Heart left ventricle (tissue), 16 donors: ENCODE measurements at regions of chr7 and their contacts with region 1.

Region 1: DNA sequence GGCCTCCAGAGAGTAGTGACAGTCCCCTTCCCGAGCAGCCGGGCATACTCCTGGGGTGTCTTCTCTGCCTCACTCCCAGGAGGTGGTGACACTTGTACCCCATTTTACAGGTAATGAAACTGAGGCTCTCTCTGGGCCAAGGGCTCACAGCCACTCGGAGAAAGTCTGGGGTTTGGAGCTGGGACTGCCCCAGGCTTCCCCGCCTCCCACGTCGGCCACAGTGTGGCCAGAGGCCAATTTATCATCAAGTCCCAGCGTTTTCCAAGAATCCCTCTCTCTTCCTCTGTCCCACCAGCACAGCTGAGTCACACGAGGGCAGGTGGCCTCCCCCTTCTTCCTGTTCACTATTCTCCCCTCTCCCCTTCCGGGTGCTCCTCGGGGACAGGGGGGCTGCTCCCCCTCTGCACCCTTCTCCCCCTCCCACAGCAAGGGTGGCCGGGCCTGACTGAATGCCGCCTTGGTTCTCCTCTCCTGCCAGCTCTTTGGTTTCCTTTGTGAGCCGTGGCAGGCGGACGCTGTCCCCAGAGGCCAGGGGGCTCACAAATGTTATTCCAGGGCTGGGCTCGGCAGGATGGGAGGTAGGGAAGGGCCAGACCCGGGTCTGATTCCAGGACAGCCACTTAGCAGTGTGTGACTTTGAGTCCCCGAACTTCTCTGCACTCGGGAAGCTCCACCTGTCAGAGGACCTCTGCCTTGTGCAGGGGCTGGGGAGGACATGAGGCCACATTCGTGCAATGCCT is 17.7 kb downstream of the CLIP2 start:
- DNase-seq: peak; percentile 54 to 73 (median 67)
- ATAC-seq: peak; percentile 27 to 89 (median 75)
- H3K4me3 ChIP-seq: peak overlapping the region in 9 of 12 donors; percentile 3 to 38 (median 24)
- H3K27ac ChIP-seq: peak overlapping the region in 6 of 12 donors; percentile 14 to 55 (median 36)
- H3K4me1 ChIP-seq: peaks cover 0 to 23% (median 17%) of the 10 kb centered on the region in 12 donors
- H3K27me3 ChIP-seq: no peaks in the 10 kb centered on the region
- CTCF ChIP-seq: no peak
- POLR2A ChIP-seq: no peak

Region 2: DNA sequence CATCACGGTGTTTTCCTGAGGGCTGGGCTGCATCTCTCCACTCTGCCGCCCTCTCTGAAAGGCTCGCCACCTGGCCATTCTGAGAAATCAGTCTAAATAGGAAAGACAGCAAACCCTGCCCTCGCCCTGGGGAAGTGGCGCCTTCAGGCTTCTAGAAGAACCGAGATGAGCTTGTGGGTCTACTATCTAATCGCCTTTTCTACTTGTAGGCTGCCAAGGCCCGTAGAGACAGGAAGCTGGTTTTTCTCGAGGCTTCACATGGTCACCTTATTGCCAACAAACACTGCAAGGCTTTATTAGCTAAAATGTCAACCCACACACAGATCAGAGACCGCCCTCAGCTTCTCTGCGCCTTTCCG is 75.7 kb before region 1 on chr7:
- intact Hi-C with region 1: loop called in 1 of 10 experiments (anchors 10 kb)
- DNase-seq: no peak
- ATAC-seq: no peak
- H3K4me3 ChIP-seq: no peak overlapping the region
- H3K27ac ChIP-seq: no peak overlapping the region
- H3K4me1 ChIP-seq: peaks cover 0 to 40% (median 0%) of the 10 kb centered on the region in 12 donors
- H3K27me3 ChIP-seq: no peaks in the 10 kb centered on the region
- CTCF ChIP-seq: no peak
- POLR2A ChIP-seq: no peak

Region 3: GRCh38 chr7:74343281-74344127 is 36.6 kb after region 1 on chr7:
- intact Hi-C with region 1: loop called in 1 of 10 experiments (anchors 5 kb)
- DNase-seq: no peak
- ATAC-seq: peak in 2 of 4 donors; percentile 34 to 60
- H3K4me3 ChIP-seq: no peak overlapping the region
- H3K27ac ChIP-seq: no peak overlapping the region
- H3K4me1 ChIP-seq: no peaks in the 10 kb centered on the region
- H3K27me3 ChIP-seq: no peaks in the 10 kb centered on the region
- CTCF ChIP-seq: no peak
- POLR2A ChIP-seq: no peak

Region 4: DNA sequence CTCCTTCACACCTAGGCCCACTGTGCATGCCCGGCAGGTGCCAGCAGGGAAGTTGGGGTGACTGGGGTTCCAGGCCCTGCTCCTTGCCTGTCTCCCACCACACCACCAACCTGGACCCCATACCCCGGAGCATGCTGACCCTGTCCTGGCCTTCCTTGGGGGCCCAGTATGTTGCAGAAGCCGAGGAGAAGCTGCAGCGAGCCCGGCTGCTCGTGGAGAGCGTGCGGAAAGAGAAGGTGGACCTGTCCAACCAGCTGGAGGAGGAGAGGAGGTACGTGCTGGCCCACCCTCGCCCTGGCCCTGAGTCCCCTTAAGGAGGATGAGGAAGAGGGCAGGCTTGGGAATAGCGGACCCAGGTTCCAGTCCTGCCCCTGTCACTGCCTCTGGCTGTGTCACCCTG is 53.1 kb after region 1 on chr7:
- intact Hi-C with region 1: no loop called
- DNase-seq: no peak
- ATAC-seq: no peak
- H3K4me3 ChIP-seq: no peak overlapping the region
- H3K27ac ChIP-seq: no peak overlapping the region
- H3K4me1 ChIP-seq: peaks cover 0 to under 1% (median 0%) of the 10 kb centered on the region in 12 donors
- H3K27me3 ChIP-seq: no peaks in the 10 kb centered on the region
- CTCF ChIP-seq: no peak
- POLR2A ChIP-seq: no peak

Region 5: GRCh38 chr7:74371381-74372341 is 64.8 kb after region 1 on chr7:
- intact Hi-C with region 1: loop called in 1 of 10 experiments (anchors 10 kb)
- DNase-seq: peak in 1 of 5 donors; percentile 12
- ATAC-seq: no peak
- H3K4me3 ChIP-seq: no peak overlapping the region
- H3K27ac ChIP-seq: peak overlapping the region in 3 of 12 donors; percentile 5 to 81 (median 27)
- H3K4me1 ChIP-seq: peaks cover 0 to 23% (median 4%) of the 10 kb centered on the region in 12 donors
- H3K27me3 ChIP-seq: no peaks in the 10 kb centered on the region
- CTCF ChIP-seq: no peak
- POLR2A ChIP-seq: no peak

Region 6: DNA sequence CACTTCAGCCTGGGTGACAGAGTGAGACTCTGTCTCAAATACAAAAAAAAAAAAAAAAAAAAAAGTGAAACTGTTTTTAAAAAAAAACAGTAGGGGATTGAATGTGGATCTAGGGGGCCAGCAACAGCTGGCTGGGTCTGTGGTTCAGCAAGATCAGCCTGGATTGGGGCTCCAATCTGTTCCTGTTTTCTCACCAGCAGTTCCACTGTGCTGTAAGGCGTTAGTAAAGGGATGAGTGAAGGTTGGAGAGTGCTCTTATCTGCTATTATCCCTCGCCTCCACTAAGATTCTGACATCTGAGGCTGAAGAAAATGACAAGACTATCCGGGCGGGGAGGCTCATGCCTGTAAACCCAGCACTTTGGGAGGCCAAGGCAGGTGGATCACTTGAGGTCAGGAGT is 105.2 kb after region 1 on chr7:
- intact Hi-C with region 1: no loop called
- DNase-seq: peak in 1 of 5 donors; percentile 11
- ATAC-seq: no peak
- H3K4me3 ChIP-seq: no peak overlapping the region
- H3K27ac ChIP-seq: no peak overlapping the region
- H3K4me1 ChIP-seq: no peaks in the 10 kb centered on the region
- H3K27me3 ChIP-seq: peaks cover 0 to under 1% (median 0%) of the 10 kb centered on the region in 9 donors
- CTCF ChIP-seq: no peak
- POLR2A ChIP-seq: no peak